OCI-LY7 (cell line): ENCODE measurements at regions of chr22 and their contacts with region 1.

Region 1: DNA sequence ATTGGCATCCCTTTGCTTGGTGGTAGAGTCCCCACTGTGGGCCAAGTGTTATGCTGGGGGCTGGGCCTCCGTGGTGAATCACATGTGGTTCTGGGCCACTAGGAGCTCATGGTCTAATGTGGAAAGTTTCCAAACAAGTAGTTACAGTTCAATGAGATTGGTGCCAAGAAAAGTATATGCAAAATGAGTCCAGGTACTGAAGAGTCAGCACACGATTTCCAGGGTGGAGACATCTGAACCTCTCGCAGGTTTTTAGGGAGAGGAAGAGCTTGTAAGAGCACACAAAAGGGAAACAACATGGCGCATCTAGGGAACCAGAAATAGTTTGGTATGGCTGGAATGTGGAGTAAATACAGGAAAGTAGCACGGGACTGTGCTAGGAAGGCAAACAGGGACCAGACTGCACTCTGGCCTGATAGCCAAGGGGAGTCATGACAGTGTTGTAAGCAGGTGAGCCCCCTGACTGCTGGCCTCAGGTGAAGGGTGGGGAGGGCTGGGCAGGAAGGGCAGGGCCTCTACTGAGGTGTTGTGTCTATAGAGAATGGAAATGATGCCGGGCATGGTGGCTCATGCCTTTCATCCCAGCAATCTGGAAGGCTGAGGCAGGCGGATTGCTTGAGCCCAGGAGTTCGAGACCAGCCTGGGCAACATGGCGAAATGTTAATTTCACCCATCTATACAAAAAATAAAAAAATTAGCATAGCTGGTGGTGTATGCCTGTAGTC is 12.6 kb downstream of the POLR2F start:
- DNase-seq: no peak
- H3K4me3 ChIP-seq: no peak overlapping the region
- H3K27ac ChIP-seq: no peak overlapping the region
- H3K4me1 ChIP-seq: no peaks in the 10 kb centered on the region
- CTCF ChIP-seq: no peak

Region 2: GRCh38 chr22:37817705-37818408 is 148.2 kb before region 1 on chr22:
- CTCF ChIA-PET with region 1: interaction called, 3 read pairs
- POLR2A ChIA-PET with region 1: no interaction called
- intact Hi-C with region 1: loop called (anchors 1 kb)
- DNase-seq: peak; percentile 76
- H3K4me3 ChIP-seq: no peak overlapping the region
- H3K27ac ChIP-seq: no peak overlapping the region
- H3K4me1 ChIP-seq: no peaks in the 10 kb centered on the region
- CTCF ChIP-seq: peak; percentile 86

Region 3: GRCh38 chr22:37905534-37906363 is 60.4 kb before region 1 on chr22 and contains the start of gene MICALL1:
- CTCF ChIA-PET with region 1: no interaction called
- POLR2A ChIA-PET with region 1: no interaction called
- intact Hi-C with region 1: loop called (anchors 2 kb)
- DNase-seq: peak; percentile 83
- H3K4me3 ChIP-seq: peak within 1 kb of the TSS; percentile 82
- H3K27ac ChIP-seq: no peak within 1 kb of the TSS
- H3K4me1 ChIP-seq: peaks cover 17% of the 10 kb centered on the region
- CTCF ChIP-seq: 0 out of 2 replicates have a peak, but pooled peaks have one; percentile 30
- total RNA-seq, gene MICALL1: 18.3 and 18.5 TPM in 2 replicates

Region 4: DNA sequence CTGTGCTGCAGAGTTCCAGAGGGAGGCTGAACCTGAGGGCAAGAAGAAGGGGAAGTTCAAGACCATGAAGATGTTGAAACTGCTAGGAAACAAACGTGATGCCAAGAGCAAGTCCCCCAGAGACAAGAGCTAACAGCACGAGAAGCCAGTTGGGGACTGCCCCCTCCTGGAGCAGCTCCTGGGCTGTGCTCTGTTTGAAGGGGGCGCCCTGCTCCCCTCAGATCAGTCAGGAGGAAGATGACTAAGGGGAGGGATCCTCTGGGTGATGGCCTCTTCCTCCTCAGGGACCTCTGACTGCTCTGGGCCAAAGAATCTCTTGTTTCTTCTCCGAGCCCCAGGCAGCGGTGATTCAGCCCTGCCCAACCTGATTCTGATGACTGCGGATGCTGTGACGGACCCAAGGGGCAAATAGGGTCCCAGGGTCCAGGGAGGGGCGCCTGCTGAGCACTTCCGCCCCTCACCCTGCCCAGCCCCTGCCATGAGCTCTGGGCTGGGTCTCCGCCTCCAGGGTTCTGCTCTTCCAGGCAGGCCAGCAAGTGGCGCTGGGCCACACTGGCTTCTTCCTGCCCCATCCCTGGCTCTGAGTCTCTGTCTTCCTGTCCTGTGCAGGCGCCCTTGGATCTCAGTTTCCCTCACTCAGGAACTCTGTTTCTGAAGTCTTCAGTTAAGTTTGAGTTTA is 25.3 kb before region 1 on chr22:
- CTCF ChIA-PET with region 1: no interaction called
- POLR2A ChIA-PET with region 1: no interaction called
- intact Hi-C with region 1: no loop called
- DNase-seq: no peak
- H3K4me3 ChIP-seq: no peak overlapping the region
- H3K27ac ChIP-seq: no peak overlapping the region
- H3K4me1 ChIP-seq: no peaks in the 10 kb centered on the region
- CTCF ChIP-seq: no peak